ENCODE measurements at regions of chr19 and their contacts with region 1.

Region 1: DNA sequence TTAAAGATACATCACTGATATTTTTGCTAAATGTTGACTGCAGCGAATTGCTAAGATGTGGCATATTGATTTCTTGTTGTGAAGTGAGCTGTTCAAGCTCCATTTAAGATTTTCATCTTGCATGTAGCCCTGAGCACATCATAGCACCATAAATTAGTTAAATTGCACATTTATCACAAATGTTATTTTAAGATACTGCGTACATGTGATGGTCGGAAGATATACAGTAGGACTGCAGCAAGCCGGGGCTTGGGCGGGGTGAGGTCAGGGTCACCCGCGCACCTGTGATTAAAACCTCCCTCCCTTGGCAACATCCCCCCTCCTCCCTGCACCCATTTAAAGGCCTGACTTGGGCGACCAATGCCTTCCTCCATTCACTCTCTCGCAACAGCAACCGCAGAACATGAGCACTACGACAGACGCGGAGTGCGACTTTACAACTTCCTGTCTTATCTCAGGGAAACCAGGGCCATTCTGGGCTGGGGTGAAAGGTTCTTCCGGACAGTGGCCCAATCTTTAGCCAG is 76.6 kb downstream of the TSHZ3 start:
- DNase-seq: no peak
- ATAC-seq: no peak
- H3K4me3 ChIP-seq: no peak overlapping the region
- H3K27ac ChIP-seq: no peak overlapping the region
- H3K4me1 ChIP-seq: peaks cover 3% of the 10 kb centered on the region; the same call in 1 of the 2 replicates
- H3K27me3 ChIP-seq: no peaks in the 10 kb centered on the region
- CTCF ChIP-seq: no peak
- POLR2A ChIP-seq: no peak
- RAD21 ChIP-seq: no peak

Region 2: GRCh38 chr19:31232871-31233270 is 39.8 kb before region 1 on chr19:
- CTCF ChIA-PET with region 1: no interaction called
- POLR2A ChIA-PET with region 1: no interaction called
- dilution Hi-C with region 1: no loop called
- in situ Hi-C with region 1: no loop called
- intact Hi-C with region 1: no loop called
- DNase-seq: peak; percentile 96
- ATAC-seq: peak; percentile 88
- H3K4me3 ChIP-seq: no peak overlapping the region
- H3K27ac ChIP-seq: peak overlapping the region; percentile 36; the same call in 1 of the 2 replicates
- H3K4me1 ChIP-seq: peaks cover 9% of the 10 kb centered on the region
- H3K27me3 ChIP-seq: no peaks in the 10 kb centered on the region
- CTCF ChIP-seq: no peak
- POLR2A ChIP-seq: no peak
- RAD21 ChIP-seq: peak; percentile 8; the same call in 1 of the 2 replicates

Region 3: GRCh38 chr19:31285744-31286143 is 13.1 kb after region 1 on chr19:
- CTCF ChIA-PET with region 1: no interaction called
- POLR2A ChIA-PET with region 1: interaction called, 13 read pairs
- dilution Hi-C with region 1: no loop called
- in situ Hi-C with region 1: no loop called
- intact Hi-C with region 1: no loop called
- DNase-seq: peak; percentile 64
- ATAC-seq: peak; percentile 69
- H3K4me3 ChIP-seq: no peak overlapping the region
- H3K27ac ChIP-seq: peak overlapping the region; percentile 10; the same call in 1 of the 2 replicates
- H3K4me1 ChIP-seq: peaks cover 12% of the 10 kb centered on the region
- H3K27me3 ChIP-seq: no peaks in the 10 kb centered on the region
- CTCF ChIP-seq: no peak
- POLR2A ChIP-seq: no peak
- RAD21 ChIP-seq: no peak

Region 4: DNA sequence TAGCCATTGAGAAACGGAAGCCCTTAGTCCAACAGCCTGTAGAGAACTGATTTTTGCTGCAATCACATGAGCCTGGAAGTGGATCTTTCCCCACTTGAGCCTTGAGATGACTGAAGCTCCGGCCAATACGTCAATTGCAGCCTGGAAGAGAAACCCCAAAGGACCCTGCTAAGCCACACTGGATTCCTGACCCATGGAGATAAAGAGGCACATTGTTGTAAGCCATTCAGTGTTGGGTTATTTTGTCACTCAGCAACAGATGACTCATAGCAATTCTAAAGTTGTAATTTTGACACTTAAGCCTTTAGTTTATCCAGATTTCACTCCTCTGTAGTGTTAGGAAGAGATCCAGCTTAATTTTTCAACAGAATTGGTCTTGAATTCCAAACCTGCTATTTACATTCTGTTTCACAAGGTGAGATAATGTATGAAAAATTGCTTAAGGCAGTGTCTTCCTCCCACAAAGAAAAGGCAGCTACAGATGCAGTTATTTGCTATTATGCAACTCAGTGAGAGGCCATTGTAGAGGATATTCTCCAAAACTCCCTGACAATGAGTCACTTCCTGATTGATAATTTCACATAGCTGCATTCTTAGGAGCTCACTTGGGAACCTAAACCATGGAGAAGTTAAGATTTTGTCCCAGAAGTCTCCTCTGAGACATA is 135.9 kb after region 1 on chr19:
- CTCF ChIA-PET with region 1: no interaction called
- POLR2A ChIA-PET with region 1: no interaction called
- dilution Hi-C with region 1: no loop called
- in situ Hi-C with region 1: no loop called
- intact Hi-C with region 1: no loop called
- DNase-seq: peak; percentile 87
- ATAC-seq: peak; percentile 90
- H3K4me3 ChIP-seq: no peak overlapping the region
- H3K27ac ChIP-seq: no peak overlapping the region
- H3K4me1 ChIP-seq: peaks cover 7% of the 10 kb centered on the region
- H3K27me3 ChIP-seq: peaks cover 8% of the 10 kb centered on the region; the same call in 1 of the 2 replicates
- CTCF ChIP-seq: no peak
- POLR2A ChIP-seq: no peak
- RAD21 ChIP-seq: no peak

Measured in IMR-90 (cell line).